ENCODE measurements at regions of chr10 and their contacts with region 1.

Region 1: DNA sequence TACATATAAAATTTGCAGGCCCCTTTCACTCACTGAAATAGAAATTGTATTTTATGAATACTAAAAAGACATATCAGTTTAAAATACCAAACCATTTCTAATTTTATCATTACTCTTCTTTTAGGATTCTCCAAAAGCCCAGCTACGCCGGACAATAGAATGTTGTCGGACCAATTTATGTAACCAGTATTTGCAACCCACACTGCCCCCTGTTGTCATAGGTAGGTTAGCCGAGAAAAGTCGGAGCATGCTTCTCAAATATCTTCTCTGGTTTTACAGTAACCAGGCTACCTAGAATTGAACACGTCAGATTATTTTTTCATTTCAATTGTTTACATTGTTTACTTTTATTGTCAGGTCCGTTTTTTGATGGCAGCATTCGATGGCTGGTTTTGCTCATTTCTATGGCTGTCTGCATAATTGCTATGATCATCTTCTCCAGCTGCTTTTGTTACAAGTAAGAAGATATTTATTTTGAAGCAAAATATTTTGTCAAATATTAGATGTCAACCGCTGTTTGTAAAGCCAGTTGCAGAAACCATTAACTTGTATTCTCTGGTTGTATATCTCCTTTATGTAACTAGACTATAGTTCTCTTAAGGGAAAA is 57.6 kb downstream of the MMRN2 start:
- DNase-seq: peak in 1 of 2 donors; percentile 60
- ATAC-seq: peak; percentile 88
- H3K4me3 ChIP-seq: no peak overlapping the region
- H3K27ac ChIP-seq: no peak overlapping the region
- H3K4me1 ChIP-seq: no peaks in the 10 kb centered on the region
- H3K27me3 ChIP-seq: no peaks in the 10 kb centered on the region

Region 2: DNA sequence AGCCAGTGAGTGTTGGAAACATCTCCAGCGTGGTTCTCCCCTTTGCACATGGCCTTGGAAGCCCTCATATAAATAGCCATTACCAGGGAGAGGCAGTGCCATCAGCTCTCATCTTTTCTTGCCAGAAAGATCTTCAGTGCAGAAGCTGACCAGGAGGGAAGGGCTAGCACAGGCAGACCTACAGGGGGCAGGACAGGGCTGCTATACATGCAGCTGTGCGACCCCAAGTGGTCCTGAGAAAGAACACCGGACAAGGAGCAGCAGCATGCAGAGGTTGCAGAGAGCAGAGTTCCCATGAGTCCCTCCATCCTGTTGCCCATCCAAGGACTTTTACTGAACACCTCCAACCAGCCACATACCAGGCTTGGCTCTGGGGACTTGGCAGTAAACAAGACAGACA is 550.3 kb before region 1 on chr10:
- intact Hi-C with region 1: no loop called
- DNase-seq: peak; percentile 10 to 12
- ATAC-seq: no peak
- H3K4me3 ChIP-seq: no peak overlapping the region
- H3K27ac ChIP-seq: no peak overlapping the region
- H3K4me1 ChIP-seq: no peaks in the 10 kb centered on the region
- H3K27me3 ChIP-seq: no peaks in the 10 kb centered on the region

Region 3: DNA sequence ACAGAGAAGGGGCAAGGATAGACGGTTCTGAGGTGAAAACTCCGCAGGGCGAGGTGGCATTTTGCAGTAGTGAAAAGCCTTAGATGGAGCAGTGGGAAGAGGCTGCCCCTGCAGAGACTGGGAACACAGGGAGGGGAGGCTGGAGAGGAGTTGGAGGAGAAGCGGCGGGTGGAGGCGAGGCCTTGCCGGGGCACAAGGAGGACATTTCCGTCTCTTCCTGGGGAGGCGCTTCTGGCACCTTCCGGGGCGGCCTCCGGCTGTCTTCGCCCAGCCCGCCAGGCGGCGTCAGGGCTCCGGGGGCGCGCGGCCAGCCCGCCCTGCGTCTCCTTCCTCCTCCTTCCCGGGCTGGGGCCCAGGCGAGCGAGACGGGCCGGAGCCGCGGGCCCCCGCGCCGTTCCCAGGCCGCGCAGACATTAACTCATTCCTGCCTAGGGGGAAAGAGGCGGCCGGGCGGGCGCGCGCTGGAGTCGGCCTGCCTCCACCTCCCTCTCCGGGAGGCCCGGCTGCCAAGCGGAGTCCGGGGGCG is 188.7 kb before region 1 on chr10:
- intact Hi-C with region 1: loop called (anchors 2 to 5 kb)
- DNase-seq: peak; percentile 94 to 96
- ATAC-seq: peak; percentile 94
- H3K4me3 ChIP-seq: peak overlapping the region; percentile 66 to 91
- H3K27ac ChIP-seq: peak overlapping the region; percentile 82 to 87
- H3K4me1 ChIP-seq: no peaks in the 10 kb centered on the region
- H3K27me3 ChIP-seq: no peaks in the 10 kb centered on the region

Region 4: DNA sequence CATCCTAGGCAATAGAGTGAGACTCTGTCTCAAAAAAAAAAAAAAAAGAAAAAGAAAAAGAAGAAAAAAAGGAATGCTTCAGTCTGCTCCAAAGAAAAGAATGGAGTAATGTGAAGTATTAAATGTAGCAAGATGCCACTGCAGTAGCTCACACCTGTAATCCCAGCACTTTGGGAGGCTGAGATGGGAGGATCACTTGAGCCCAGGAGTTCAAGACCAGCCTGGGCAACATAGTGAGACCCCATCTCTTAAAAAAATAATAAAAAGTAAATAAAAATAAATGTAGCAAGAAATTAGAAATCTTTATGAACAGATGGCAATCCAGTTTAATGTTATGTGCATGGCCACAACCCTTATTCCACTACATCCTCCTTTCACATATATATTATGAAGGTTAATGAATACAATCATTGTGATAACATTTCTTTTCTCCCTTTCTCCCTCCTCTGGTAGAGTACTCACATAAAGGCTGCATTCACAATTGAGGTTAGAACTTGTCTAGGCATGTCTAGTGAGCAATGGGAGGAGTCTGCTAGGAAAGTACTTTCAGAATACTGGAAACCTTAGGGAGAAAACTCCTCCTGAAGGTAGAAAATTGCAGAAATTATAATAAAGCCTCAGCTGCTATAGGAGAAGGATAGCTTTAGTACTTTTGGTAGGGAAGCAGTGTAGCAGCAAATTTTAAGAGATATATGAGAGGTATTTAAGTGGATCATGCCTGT is 943.2 kb after region 1 on chr10:
- intact Hi-C with region 1: no loop called
- DNase-seq: no peak
- ATAC-seq: no peak
- H3K4me3 ChIP-seq: no peak overlapping the region
- H3K27ac ChIP-seq: no peak overlapping the region
- H3K4me1 ChIP-seq: no peaks in the 10 kb centered on the region
- H3K27me3 ChIP-seq: no peaks in the 10 kb centered on the region

Measured in aorta (tissue), 5 donors.